GM12878 (cell line): ENCODE measurements at regions of chr1 and their contacts with region 1.

Region 1: GRCh38 chr1:165597883-165598675 is 33.0 kb upstream of the MGST3 start:
- DNase-seq: peak; percentile 90
- ATAC-seq: peak; percentile 98
- H3K4me3 ChIP-seq: peak overlapping the region; percentile 70
- H3K27ac ChIP-seq: peak overlapping the region; percentile 71
- H3K4me1 ChIP-seq: peaks cover 14% of the 10 kb centered on the region
- H3K27me3 ChIP-seq: peaks cover 0 to 8% of the 10 kb centered on the region in 2 experiments; a peak in 1 of 4 replicates
- CTCF ChIP-seq: no peak
- EP300 ChIP-seq: no peak
- POLR2A ChIP-seq: peak; percentile 40; the same call in 1 of the 2 replicates
- RAD21 ChIP-seq: no peak

Region 2: GRCh38 chr1:165257969-165258459 is 340.1 kb before region 1 on chr1:
- CTCF ChIA-PET with region 1: interaction called, 8 read pairs
- POLR2A ChIA-PET with region 1: no interaction called
- RAD21 ChIA-PET with region 1: no interaction called
- SMC1A ChIA-PET with region 1: interaction called, 6 read pairs
- in situ Hi-C with region 1: no loop called
- intact Hi-C with region 1: loop called (anchors 1 kb)
- DNase-seq: peak; percentile 9
- ATAC-seq: peak; percentile 88
- H3K4me3 ChIP-seq: no peak overlapping the region
- H3K27ac ChIP-seq: no peak overlapping the region
- H3K4me1 ChIP-seq: no peaks in the 10 kb centered on the region
- H3K27me3 ChIP-seq: no peaks in the 10 kb centered on the region
- CTCF ChIP-seq: peak; percentile 67 to 82 (median 76)
- EP300 ChIP-seq: no peak
- POLR2A ChIP-seq: no peak
- RAD21 ChIP-seq: peak; percentile 48

Region 3: GRCh38 chr1:165342587-165342986 is 255.5 kb before region 1 on chr1:
- CTCF ChIA-PET with region 1: no interaction called
- POLR2A ChIA-PET with region 1: no interaction called
- RAD21 ChIA-PET with region 1: no interaction called
- SMC1A ChIA-PET with region 1: no interaction called
- in situ Hi-C with region 1: no loop called
- intact Hi-C with region 1: no loop called
- DNase-seq: no peak
- ATAC-seq: no peak
- H3K4me3 ChIP-seq: no peak overlapping the region
- H3K27ac ChIP-seq: no peak overlapping the region
- H3K4me1 ChIP-seq: no peaks in the 10 kb centered on the region
- H3K27me3 ChIP-seq: peaks cover 0 to 2% of the 10 kb centered on the region in 2 experiments; a peak in 1 of 4 replicates
- CTCF ChIP-seq: no peak
- EP300 ChIP-seq: no peak
- POLR2A ChIP-seq: no peak
- RAD21 ChIP-seq: no peak

Region 4: GRCh38 chr1:165392634-165393571 is 205.2 kb before region 1 on chr1:
- CTCF ChIA-PET with region 1: interaction called, 176 read pairs
- POLR2A ChIA-PET with region 1: no interaction called
- RAD21 ChIA-PET with region 1: interaction called, 49 read pairs
- SMC1A ChIA-PET with region 1: interaction called, 109 read pairs
- in situ Hi-C with region 1: loop called (anchors 5 kb)
- intact Hi-C with region 1: loop called (anchors 1 kb)
- DNase-seq: peak; percentile 64
- ATAC-seq: peak; percentile 99
- H3K4me3 ChIP-seq: no peak overlapping the region
- H3K27ac ChIP-seq: no peak overlapping the region
- H3K4me1 ChIP-seq: peaks cover 9% of the 10 kb centered on the region; the same call in 1 of the 2 replicates
- H3K27me3 ChIP-seq: peaks cover 1 to 3% of the 10 kb centered on the region in 2 experiments; a peak in 2 of 4 replicates
- CTCF ChIP-seq: peak; percentile 95 to 96 (median 95)
- EP300 ChIP-seq: peak in 1 of 2 experiments; percentile 15; a peak in 2 of 4 replicates
- POLR2A ChIP-seq: no peak
- RAD21 ChIP-seq: peak; percentile 88

Region 5: GRCh38 chr1:165580941-165581871 is 16.9 kb before region 1 on chr1:
- CTCF ChIA-PET with region 1: interaction called, 13 read pairs
- POLR2A ChIA-PET with region 1: no interaction called
- RAD21 ChIA-PET with region 1: no interaction called
- SMC1A ChIA-PET with region 1: interaction called, 5 read pairs
- in situ Hi-C with region 1: no loop called
- intact Hi-C with region 1: no loop called
- DNase-seq: no peak
- ATAC-seq: no peak
- H3K4me3 ChIP-seq: no peak overlapping the region
- H3K27ac ChIP-seq: no peak overlapping the region
- H3K4me1 ChIP-seq: no peaks in the 10 kb centered on the region
- H3K27me3 ChIP-seq: 0 out of 4 replicates have a peak, but pooled peaks cover 0 to 3% of the 10 kb centered on the region in 2 experiments
- CTCF ChIP-seq: no peak
- EP300 ChIP-seq: no peak
- POLR2A ChIP-seq: no peak
- RAD21 ChIP-seq: no peak

Region 6: DNA sequence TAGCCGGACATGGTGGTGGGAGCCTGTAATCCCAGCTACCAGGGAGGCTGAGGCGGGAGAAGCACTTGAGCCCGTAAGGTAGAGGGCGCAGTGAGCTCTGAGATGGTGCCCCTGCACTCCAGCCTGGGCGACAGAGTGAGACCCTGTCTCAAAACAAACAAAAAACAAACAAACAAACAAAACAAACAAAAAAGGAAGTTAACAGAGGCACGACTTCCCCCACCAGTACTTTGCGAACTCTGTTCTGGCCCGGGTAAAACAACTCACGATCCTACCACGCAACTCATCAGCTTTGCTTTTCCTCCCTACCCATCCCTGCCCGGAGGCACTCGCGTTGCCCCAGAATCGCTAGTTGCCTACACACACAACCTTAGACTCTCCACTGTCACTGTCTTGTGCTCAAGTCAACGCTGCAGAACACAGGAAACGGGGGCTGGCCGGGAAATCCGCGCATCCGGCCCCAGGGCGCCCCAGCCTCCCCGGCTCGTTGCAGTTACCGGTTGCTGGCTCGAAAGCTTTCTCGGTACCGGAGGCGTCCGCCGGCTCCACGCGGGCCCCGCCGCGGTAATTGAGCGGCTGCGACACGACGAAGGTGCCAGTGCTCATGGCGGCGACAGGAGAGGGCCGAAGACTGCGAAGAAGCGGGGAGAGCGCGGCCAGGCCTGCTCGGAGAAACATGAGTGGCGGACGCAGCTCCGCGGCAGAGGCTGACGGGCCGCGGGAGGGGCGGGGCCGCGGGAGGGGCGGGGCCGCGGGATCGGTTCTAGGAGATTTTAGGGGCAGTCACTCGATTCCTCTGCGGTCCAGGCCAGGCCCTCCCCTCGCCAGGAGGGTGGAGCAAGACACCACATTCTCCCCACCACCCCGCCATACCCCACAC is 100.0 kb after region 1 on chr1 and contains the start of gene ALDH9A1:
- CTCF ChIA-PET with region 1: interaction called, 25 read pairs
- POLR2A ChIA-PET with region 1: interaction called, 6 read pairs
- RAD21 ChIA-PET with region 1: interaction called, 24 read pairs
- SMC1A ChIA-PET with region 1: interaction called, 39 read pairs
- in situ Hi-C with region 1: no loop called
- intact Hi-C with region 1: loop called (anchors 2 kb)
- DNase-seq: peak; percentile 41
- ATAC-seq: peak; percentile 95
- H3K4me3 ChIP-seq: peak within 1 kb of the TSS; percentile 73
- H3K27ac ChIP-seq: peak within 1 kb of the TSS; percentile 93
- H3K4me1 ChIP-seq: no peaks in the 10 kb centered on the region; the same call in 1 of the 2 replicates
- H3K27me3 ChIP-seq: no peaks in the 10 kb centered on the region
- CTCF ChIP-seq: peak in 2 of 3 experiments; percentile 19 to 28; a peak in 1 of 6 replicates
- EP300 ChIP-seq: no peak
- POLR2A ChIP-seq: peak; percentile 95
- RAD21 ChIP-seq: no peak
- polyA plus RNA-seq, gene ALDH9A1: 25.7 to 35.6 TPM

Region 7: GRCh38 chr1:165827268-165828102 is 229.4 kb after region 1 on chr1 and contains the start of gene UCK2:
- CTCF ChIA-PET with region 1: interaction called, 5 read pairs
- POLR2A ChIA-PET with region 1: interaction called, 4 read pairs
- RAD21 ChIA-PET with region 1: interaction called, 3 read pairs
- SMC1A ChIA-PET with region 1: no interaction called
- in situ Hi-C with region 1: no loop called
- intact Hi-C with region 1: loop called (anchors 5 kb)
- DNase-seq: no peak
- ATAC-seq: peak; percentile 87
- H3K4me3 ChIP-seq: peak within 1 kb of the TSS; percentile 86
- H3K27ac ChIP-seq: peak within 1 kb of the TSS; percentile 86
- H3K4me1 ChIP-seq: no peaks in the 10 kb centered on the region; the same call in 1 of the 2 replicates
- H3K27me3 ChIP-seq: no peaks in the 10 kb centered on the region
- CTCF ChIP-seq: peak in 1 of 3 experiments; percentile 9; a peak in 2 of 6 replicates
- EP300 ChIP-seq: no peak
- POLR2A ChIP-seq: peak; percentile 66
- RAD21 ChIP-seq: peak; percentile 43; the same call in 1 of the 2 replicates
- polyA plus RNA-seq, gene UCK2: 67.0 to 74.3 TPM

Region 8: DNA sequence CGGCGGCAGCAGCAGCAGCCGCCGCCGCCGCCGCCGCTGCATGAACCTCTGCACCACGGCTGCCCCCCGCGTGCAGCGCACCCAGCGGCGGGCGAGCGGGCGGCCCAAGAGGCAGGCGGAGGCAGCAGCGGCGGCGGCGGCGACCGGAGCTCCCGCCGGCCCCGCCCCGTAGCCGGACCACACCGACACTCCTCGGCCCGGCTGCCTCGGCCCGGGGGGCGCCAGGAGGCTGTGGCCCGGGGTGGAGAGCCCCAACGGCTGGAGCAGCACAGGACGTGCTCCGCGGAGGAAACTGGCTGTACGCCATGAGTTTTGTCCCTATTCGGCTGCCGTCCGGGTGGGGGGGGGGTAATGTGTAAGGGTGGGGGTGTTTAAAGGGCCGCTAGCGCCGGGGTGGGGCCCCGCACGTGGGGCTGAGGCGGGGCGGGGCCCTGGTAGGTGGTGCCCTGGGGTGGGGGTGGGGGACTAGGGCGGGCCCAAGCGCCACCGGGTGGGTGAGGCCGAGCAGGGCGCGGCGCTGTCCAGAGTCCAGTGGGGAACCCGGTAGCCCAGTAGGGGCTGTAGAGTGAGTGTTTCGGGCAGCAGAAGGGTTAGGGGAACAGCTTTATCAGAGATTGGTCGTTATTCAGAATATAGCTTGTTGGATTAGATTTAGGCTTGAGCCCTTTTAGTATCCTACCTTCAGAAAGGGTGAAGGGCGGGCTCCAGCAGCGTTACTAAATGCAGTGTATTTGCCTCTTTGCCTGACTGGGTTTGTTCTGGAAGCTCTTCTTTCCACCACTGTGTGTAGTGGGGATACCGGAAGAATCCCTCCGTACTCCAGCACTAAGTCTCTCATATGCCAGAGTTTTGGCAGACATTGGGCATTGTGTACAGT is 568.9 kb after region 1 on chr1 and contains the start of gene FAM78B:
- CTCF ChIA-PET with region 1: interaction called, 3 read pairs
- POLR2A ChIA-PET with region 1: interaction called, 3 read pairs
- RAD21 ChIA-PET with region 1: no interaction called
- SMC1A ChIA-PET with region 1: no interaction called
- in situ Hi-C with region 1: no loop called
- intact Hi-C with region 1: loop called (anchors 10 kb)
- DNase-seq: peak; percentile 36
- ATAC-seq: peak; percentile 71
- H3K4me3 ChIP-seq: peak within 1 kb of the TSS; percentile 66
- H3K27ac ChIP-seq: peak within 1 kb of the TSS; percentile 36
- H3K4me1 ChIP-seq: peaks cover 40% of the 10 kb centered on the region
- H3K27me3 ChIP-seq: no peaks in the 10 kb centered on the region; a peak in 1 of 4 replicates
- CTCF ChIP-seq: peak; percentile 4 to 14 (median 5); a peak in 1 of 6 replicates
- EP300 ChIP-seq: no peak
- POLR2A ChIP-seq: no peak
- RAD21 ChIP-seq: no peak
- polyA plus RNA-seq, gene FAM78B: 0.31 to 0.40 TPM